Caco-2 (cell line): ENCODE measurements at regions of chr7 and their contacts with region 1.

Region 1: GRCh38 chr7:144437370-144438191 is 34.1 kb upstream of the NOBOX start:
- DNase-seq: peak; percentile 60 to 76
- H3K4me3 ChIP-seq: no peak overlapping the region
- H3K4me3 Mint-ChIP-seq: no peak overlapping the region
- H3K27ac Mint-ChIP-seq: no peak overlapping the region
- H3K4me1 ChIP-seq: no peaks in the 10 kb centered on the region
- H3K4me1 Mint-ChIP-seq: no peaks in the 10 kb centered on the region
- H3K27me3 ChIP-seq: no peaks in the 10 kb centered on the region
- H3K27me3 Mint-ChIP-seq: no peaks in the 10 kb centered on the region
- CTCF ChIP-seq: peak; percentile 61 to 81

Region 2: GRCh38 chr7:144391823-144392255 is 45.7 kb before region 1 on chr7:
- CTCF ChIA-PET with region 1: no interaction called
- POLR2A ChIA-PET with region 1: no interaction called
- intact Hi-C with region 1: loop called (anchors 2 kb)
- DNase-seq: peak in 1 of 2 experiments; percentile 39
- H3K4me3 ChIP-seq: no peak overlapping the region
- H3K4me3 Mint-ChIP-seq: no peak overlapping the region
- H3K27ac Mint-ChIP-seq: no peak overlapping the region
- H3K4me1 ChIP-seq: no peaks in the 10 kb centered on the region; the same call in 1 of the 2 replicates
- H3K4me1 Mint-ChIP-seq: peaks cover 13% of the 10 kb centered on the region
- H3K27me3 ChIP-seq: no peaks in the 10 kb centered on the region
- H3K27me3 Mint-ChIP-seq: peaks cover 3% of the 10 kb centered on the region
- CTCF ChIP-seq: peak; percentile 65 to 69

Region 3: GRCh38 chr7:144784943-144785342 is 347.4 kb after region 1 on chr7:
- CTCF ChIA-PET with region 1: no interaction called
- POLR2A ChIA-PET with region 1: no interaction called
- intact Hi-C with region 1: no loop called
- DNase-seq: no peak
- H3K4me3 ChIP-seq: no peak overlapping the region
- H3K4me3 Mint-ChIP-seq: no peak overlapping the region
- H3K27ac Mint-ChIP-seq: no peak overlapping the region
- H3K4me1 ChIP-seq: peaks cover 22% of the 10 kb centered on the region
- H3K4me1 Mint-ChIP-seq: peaks cover 6% of the 10 kb centered on the region
- H3K27me3 ChIP-seq: no peaks in the 10 kb centered on the region
- H3K27me3 Mint-ChIP-seq: no peaks in the 10 kb centered on the region
- CTCF ChIP-seq: no peak